BJ (cell line): ENCODE measurements at regions of chr19 and their contacts with region 1.

Region 1: GRCh38 chr19:7149956-7150705 is 80.6 kb downstream of the ZNF557 start:
- DNase-seq: no peak
- H3K4me3 ChIP-seq: no peak overlapping the region
- H3K27me3 ChIP-seq: no peaks in the 10 kb centered on the region
- CTCF ChIP-seq: no peak

Region 2: DNA sequence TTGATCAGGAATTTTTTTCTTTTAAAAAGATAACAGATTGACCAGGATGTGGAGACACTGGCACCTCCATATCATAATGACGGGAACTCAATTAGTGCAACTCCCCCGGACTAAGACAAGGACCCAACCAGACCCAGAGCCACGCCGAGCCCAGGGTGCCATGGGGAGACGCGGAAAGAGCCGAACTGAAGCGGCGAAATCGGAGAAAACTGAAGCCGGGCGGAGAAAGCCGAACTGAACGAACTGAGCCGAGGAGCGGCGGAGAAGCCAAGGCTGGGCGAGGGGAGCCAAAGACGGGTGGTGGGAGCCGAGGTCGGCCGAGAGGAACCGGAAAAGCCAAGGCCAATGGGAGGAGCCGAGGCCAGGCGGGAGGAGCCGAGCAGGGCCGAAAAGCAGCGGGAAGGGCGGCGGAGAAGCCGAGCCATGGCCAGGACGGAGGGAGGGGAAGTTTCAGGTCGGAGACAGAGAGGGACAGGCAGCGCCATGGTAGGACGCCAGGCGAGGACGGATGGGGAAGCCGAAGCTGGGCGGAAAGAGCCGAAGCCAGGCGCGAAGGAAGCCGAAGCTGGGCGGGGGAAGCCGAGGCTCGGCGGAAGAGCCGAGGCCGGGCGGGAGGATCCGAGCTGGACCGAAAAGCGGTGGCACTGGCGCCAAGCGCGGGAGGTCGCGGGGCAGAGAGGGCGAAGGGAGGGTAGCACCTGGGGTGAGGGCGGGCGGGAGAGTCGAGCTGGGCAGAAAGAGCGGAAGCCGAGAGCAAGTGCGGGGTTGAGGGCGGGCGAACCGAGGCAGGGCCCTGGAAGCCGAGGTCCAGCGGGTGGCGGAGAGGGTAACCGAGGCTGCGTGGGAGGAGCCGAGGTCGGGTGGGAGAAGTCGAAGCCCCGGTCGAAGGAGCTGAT is 51.2 kb before region 1 on chr19:
- CTCF ChIA-PET with region 1: interaction called, 11 read pairs
- POLR2A ChIA-PET with region 1: no interaction called
- DNase-seq: peak; percentile 63
- H3K4me3 ChIP-seq: peak overlapping the region; percentile 91
- H3K27me3 ChIP-seq: no peaks in the 10 kb centered on the region
- CTCF ChIP-seq: no peak

Region 3: GRCh38 chr19:7137120-7137519 is 13.0 kb before region 1 on chr19:
- CTCF ChIA-PET with region 1: interaction called, 16 read pairs
- POLR2A ChIA-PET with region 1: no interaction called
- DNase-seq: no peak
- H3K4me3 ChIP-seq: no peak overlapping the region
- H3K27me3 ChIP-seq: no peaks in the 10 kb centered on the region
- CTCF ChIP-seq: no peak